ENCODE measurements at regions of chr18 and their contacts with region 1.

Region 1: DNA sequence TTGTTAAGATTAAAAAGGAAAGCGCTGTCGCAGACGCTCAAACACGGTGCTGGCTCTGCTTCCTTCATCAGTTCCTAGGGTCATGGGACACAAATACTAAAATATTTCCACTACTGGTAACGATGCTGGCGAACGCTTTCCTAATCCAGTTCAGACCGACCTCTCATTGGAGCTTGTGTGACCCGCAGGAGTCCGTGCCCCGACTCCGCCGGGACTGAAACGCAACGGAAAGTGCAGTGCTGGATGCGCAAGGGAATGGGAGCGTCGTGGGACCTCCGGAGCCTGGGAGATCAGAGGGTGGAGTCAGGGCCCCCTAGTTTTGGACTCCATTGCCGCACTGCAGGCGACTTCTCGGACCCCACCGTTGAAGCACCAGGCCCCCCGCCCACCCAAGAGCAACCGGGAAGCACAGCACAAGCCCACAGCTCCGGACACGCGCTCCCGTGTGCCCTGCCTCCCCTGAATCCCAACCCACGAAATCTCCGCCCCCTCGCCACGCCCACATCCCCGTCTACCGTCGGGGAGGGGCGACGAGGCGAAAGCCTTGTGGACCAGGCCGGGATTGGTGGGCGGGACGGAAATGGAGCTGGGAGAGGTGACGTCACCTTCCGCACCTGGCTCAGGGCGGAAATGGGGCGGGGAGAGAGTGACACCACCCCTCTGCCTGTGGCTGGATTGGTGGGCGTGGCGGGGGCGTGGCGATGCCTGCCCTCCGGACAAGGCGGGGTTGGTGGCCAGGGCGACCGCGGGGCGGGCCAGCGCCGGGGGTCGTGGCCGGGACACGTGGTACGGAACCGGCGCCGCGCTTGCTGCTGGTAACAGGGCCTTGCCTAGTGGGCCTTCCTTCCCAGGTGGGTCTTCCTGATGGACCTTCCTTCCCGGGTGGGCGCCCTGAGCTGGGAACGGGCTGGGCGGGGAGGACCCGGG is at the start of gene CNDP2:
- DNase-seq: peak; percentile 99
- ATAC-seq: peak; percentile 72
- H3K4me3 Mint-ChIP-seq: peak within 1 kb of the TSS; percentile 83
- H3K27ac Mint-ChIP-seq: peak within 1 kb of the TSS; percentile 100
- H3K4me1 Mint-ChIP-seq: peaks cover 47% of the 10 kb centered on the region
- H3K27me3 Mint-ChIP-seq: peaks cover 8% of the 10 kb centered on the region
- total RNA-seq, gene CNDP2: 131 to 144 TPM

Region 2: DNA sequence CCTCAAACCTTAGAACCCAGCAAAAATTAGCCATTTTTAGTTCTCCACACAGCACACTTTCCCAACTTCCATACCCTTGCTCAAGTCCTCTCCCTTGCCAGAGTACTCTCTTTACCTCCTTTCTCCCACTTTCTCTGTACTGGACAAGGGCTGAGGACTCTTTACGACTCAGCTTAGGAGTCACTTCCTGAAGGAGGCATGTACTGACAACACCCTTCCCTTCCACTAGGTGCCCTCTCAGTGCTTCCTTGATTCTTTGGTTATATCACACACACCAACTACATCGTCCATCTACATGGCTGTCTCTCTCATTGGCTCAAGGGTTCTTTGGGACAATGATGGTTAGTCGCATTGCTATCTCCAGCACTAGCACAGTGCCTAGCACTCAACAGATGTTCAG is 185.4 kb before region 1 on chr18:
- CTCF ChIA-PET with region 1: interaction called, 25 read pairs
- POLR2A ChIA-PET with region 1: no interaction called
- DNase-seq: peak; percentile 37
- ATAC-seq: peak; percentile 92
- H3K4me3 Mint-ChIP-seq: no peak overlapping the region
- H3K27ac Mint-ChIP-seq: no peak overlapping the region
- H3K4me1 Mint-ChIP-seq: no peaks in the 10 kb centered on the region
- H3K27me3 Mint-ChIP-seq: peaks cover 32% of the 10 kb centered on the region

Region 3: DNA sequence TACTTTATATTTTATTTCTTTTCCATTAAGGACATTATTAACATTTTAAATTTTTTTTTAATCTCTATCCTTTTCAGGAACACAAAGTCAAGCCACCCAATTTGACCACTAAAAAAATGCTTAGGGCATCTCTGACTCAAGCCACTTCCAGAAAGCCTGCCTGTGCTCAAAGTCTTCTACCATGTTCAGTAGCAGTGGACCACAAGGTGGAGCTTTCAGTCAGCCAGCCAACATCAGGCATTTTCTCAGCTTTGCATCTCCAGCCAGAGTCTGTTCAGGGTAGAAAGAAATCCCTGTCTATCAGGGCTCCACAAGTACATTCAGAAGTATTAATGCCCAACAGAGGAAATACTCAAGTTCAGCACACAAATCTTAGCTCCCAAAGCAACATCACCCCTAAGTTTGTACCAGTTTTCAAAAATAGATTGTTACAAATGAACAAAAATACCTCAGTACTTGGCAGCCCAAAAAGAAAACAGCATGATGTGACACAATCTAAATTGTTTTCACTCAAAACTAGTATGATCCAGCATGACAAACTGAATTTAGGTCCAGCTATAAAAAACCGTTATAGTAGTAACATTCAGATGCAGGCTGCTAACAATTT is 142.6 kb before region 1 on chr18:
- CTCF ChIA-PET with region 1: interaction called, 359 read pairs
- POLR2A ChIA-PET with region 1: interaction called, 4 read pairs
- DNase-seq: peak; percentile 78
- ATAC-seq: peak; percentile 90
- H3K4me3 Mint-ChIP-seq: no peak overlapping the region
- H3K27ac Mint-ChIP-seq: no peak overlapping the region
- H3K4me1 Mint-ChIP-seq: peaks cover 41% of the 10 kb centered on the region
- H3K27me3 Mint-ChIP-seq: peaks cover 4% of the 10 kb centered on the region

Region 4: DNA sequence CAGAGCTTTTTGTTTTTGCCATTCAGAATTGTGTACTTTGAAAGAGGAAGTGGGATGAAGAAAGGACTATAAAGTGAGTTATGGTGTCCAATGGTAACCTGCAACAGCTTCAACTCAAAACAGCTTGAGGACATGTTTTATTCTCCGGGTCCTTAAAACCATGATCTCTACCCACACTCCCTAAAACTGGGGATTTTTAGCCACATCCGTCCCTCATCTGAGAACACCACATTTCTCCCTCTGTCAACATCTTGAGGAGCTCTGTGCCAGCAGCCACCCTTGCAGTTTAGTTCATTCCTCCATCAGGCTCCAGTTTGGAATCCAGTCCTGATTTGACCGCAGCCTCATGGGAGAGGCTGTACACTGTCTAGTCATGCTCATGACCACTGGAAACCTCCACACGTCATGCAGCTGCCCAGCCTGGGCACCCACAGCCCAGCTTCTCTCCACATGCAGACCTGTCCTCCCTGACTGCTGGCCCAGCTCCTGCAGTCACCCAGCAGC is 117.6 kb before region 1 on chr18:
- CTCF ChIA-PET with region 1: interaction called, 30 read pairs
- POLR2A ChIA-PET with region 1: interaction called, 10 read pairs
- DNase-seq: peak; percentile 69
- ATAC-seq: peak; percentile 51
- H3K4me3 Mint-ChIP-seq: peak overlapping the region; percentile 54
- H3K27ac Mint-ChIP-seq: peak overlapping the region; percentile 89
- H3K4me1 Mint-ChIP-seq: peaks cover 61% of the 10 kb centered on the region
- H3K27me3 Mint-ChIP-seq: no peaks in the 10 kb centered on the region

Region 5: GRCh38 chr18:74551936-74552555 is 56.2 kb after region 1 on chr18:
- CTCF ChIA-PET with region 1: interaction called, 30 read pairs
- POLR2A ChIA-PET with region 1: no interaction called
- DNase-seq: peak; percentile 87
- ATAC-seq: peak; percentile 98
- H3K4me3 Mint-ChIP-seq: no peak overlapping the region
- H3K27ac Mint-ChIP-seq: no peak overlapping the region
- H3K4me1 Mint-ChIP-seq: peaks cover 5% of the 10 kb centered on the region
- H3K27me3 Mint-ChIP-seq: peaks cover 4% of the 10 kb centered on the region

Measured in activated CD8-positive, alpha-beta T cell treated with anti-CD3 and anti-CD28 coated beads, Interleukin-2, amount 10 ng/mL, durations not matched to agents 7 days and 5 days (primary cell).